HepG2 (cell line): ENCODE measurements at regions of chr15 and their contacts with region 1.

Region 1: GRCh38 chr15:54082836-54083492 is 104.7 kb downstream of the UNC13C start:
- DNase-seq: peak; percentile 9
- ATAC-seq: peak; percentile 61
- H3K4me3 ChIP-seq: no peak overlapping the region
- H3K27ac ChIP-seq: no peak overlapping the region
- H3K4me1 ChIP-seq: peaks cover 5% of the 10 kb centered on the region; the same call in 1 of the 2 replicates
- H3K27me3 ChIP-seq: no peaks in the 10 kb centered on the region
- CTCF ChIP-seq: peak; percentile 59
- EP300 ChIP-seq: no peak
- POLR2A ChIP-seq: no peak
- RAD21 ChIP-seq: no peak

Region 2: GRCh38 chr15:54638666-54639065 is 555.7 kb after region 1 on chr15:
- CTCF ChIA-PET with region 1: no interaction called
- POLR2A ChIA-PET with region 1: no interaction called
- in situ Hi-C with region 1: no loop called
- intact Hi-C with region 1: loop called (anchors 10 kb)
- DNase-seq: no peak
- ATAC-seq: no peak
- H3K4me3 ChIP-seq: no peak overlapping the region
- H3K27ac ChIP-seq: no peak overlapping the region
- H3K4me1 ChIP-seq: no peaks in the 10 kb centered on the region
- H3K27me3 ChIP-seq: no peaks in the 10 kb centered on the region
- CTCF ChIP-seq: no peak
- EP300 ChIP-seq: no peak
- POLR2A ChIP-seq: no peak
- RAD21 ChIP-seq: no peak

Region 3: GRCh38 chr15:55108858-55109518 is 1026.0 kb after region 1 on chr15:
- CTCF ChIA-PET with region 1: interaction called, 3 read pairs
- POLR2A ChIA-PET with region 1: no interaction called
- in situ Hi-C with region 1: no loop called
- intact Hi-C with region 1: loop called (anchors 10 kb)
- DNase-seq: peak; percentile 40
- ATAC-seq: peak; percentile 74
- H3K4me3 ChIP-seq: no peak overlapping the region
- H3K27ac ChIP-seq: no peak overlapping the region
- H3K4me1 ChIP-seq: peaks cover 14% of the 10 kb centered on the region
- H3K27me3 ChIP-seq: no peaks in the 10 kb centered on the region
- CTCF ChIP-seq: peak; percentile 68
- EP300 ChIP-seq: no peak
- POLR2A ChIP-seq: no peak
- RAD21 ChIP-seq: 0 out of 2 replicates have a peak, but pooled peaks have one; percentile 14

Region 4: DNA sequence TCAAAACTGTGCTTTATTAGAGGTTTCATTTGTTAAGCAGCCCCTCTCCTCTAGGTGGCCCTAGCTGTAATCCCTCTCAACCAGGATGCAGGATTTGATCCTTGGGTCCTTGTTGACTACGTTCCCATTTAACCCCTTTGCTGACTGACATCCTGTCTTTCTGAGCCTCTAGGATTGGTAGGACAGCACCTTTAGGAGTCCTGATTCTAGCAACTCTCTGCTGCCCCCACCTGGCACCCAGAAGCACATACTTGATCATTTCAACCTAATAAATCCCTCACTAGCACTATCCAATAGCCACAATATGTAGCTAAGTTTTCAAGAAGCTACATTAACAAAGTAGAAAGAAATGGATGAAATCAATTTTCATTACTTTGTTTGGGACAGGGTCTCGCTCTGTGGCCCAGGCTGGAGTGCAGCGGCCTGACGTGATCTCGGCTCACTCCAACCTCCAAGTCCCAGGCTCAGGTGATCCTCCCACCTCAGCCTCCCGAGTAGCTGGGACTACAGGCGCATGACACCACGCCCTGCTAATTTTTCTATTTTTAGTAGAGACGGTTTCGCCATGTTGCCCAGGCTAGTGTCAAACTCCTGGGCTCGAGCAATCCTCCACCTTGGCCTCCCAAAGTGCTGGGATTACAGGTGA is 1085.5 kb after region 1 on chr15:
- CTCF ChIA-PET with region 1: no interaction called
- POLR2A ChIA-PET with region 1: no interaction called
- in situ Hi-C with region 1: loop called (anchors 25 kb)
- intact Hi-C with region 1: no loop called
- DNase-seq: peak; percentile 83
- ATAC-seq: peak; percentile 97
- H3K4me3 ChIP-seq: no peak overlapping the region
- H3K27ac ChIP-seq: no peak overlapping the region
- H3K4me1 ChIP-seq: peaks cover 1% of the 10 kb centered on the region; the same call in 1 of the 2 replicates
- H3K27me3 ChIP-seq: no peaks in the 10 kb centered on the region
- CTCF ChIP-seq: peak; percentile 79
- EP300 ChIP-seq: no peak
- POLR2A ChIP-seq: no peak
- RAD21 ChIP-seq: peak; percentile 59; the same call in 1 of the 2 replicates